Dorsolateral prefrontal cortex (tissue), 120 donors: ENCODE measurements at regions of chr5 and their contacts with region 1.

Region 1: GRCh38 chr5:24986326-24986725 is 341.5 kb upstream of the CDH10 start:
- DNase-seq: no peak
- H3K4me3 ChIP-seq: no peak overlapping the region
- H3K27ac ChIP-seq: no peak overlapping the region
- H3K27me3 ChIP-seq: no peaks in the 10 kb centered on the region
- CTCF ChIP-seq: no peak

Region 2: GRCh38 chr5:23064710-23065109 is 1921.6 kb before region 1 on chr5:
- intact Hi-C with region 1: no loop called
- DNase-seq: no peak
- H3K4me3 ChIP-seq: no peak overlapping the region
- H3K27ac ChIP-seq: no peak overlapping the region
- H3K27me3 ChIP-seq: no peaks in the 10 kb centered on the region
- CTCF ChIP-seq: no peak

Region 3: GRCh38 chr5:24963611-24964010 is 22.7 kb before region 1 on chr5:
- intact Hi-C with region 1: loop called in 1 of 2 experiments (anchors 2 kb)
- DNase-seq: no peak
- H3K4me3 ChIP-seq: no peak overlapping the region
- H3K27ac ChIP-seq: no peak overlapping the region
- H3K27me3 ChIP-seq: no peaks in the 10 kb centered on the region
- CTCF ChIP-seq: no peak